ENCODE measurements at regions of chr7 and their contacts with region 1.

Region 1: DNA sequence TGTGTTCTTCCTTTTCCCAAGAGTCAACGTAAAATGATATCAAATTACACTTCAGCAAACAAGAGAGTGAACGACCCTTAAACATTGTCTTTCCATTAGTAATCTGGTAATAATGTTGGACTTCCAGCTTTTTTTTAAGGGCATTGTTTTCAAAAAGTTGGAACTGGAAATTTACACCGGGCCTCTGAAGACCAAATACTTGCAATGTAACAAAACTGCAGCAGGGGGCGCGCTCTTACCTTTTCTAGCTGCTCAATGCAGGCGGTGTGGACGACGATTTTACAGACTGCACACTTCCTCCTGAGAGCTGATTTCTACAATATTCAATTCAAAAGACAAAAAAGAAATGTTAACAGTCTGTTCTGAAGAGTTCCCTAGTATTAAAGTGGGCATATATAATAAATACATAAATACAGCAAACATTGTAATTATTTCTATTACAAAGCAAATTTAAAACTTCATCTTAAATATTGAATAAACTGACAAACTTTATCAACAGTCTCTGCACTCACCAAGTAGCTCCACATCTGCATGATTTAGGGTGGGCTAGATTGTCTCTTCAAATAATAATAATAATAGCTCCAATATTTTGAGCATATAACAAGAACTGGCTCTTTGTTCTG is 190.4 kb downstream of the DGKI start:
- DNase-seq: peak; percentile 20
- ATAC-seq: peak; percentile 90
- H3K4me3 ChIP-seq: no peak overlapping the region
- H3K27ac ChIP-seq: no peak overlapping the region
- H3K4me1 ChIP-seq: no peaks in the 10 kb centered on the region
- H3K27me3 ChIP-seq: no peaks in the 10 kb centered on the region
- CTCF ChIP-seq: peak; percentile 74 to 86 (median 83)
- EP300 ChIP-seq: no peak
- POLR2A ChIP-seq: no peak
- RAD21 ChIP-seq: peak; percentile 96

Region 2: DNA sequence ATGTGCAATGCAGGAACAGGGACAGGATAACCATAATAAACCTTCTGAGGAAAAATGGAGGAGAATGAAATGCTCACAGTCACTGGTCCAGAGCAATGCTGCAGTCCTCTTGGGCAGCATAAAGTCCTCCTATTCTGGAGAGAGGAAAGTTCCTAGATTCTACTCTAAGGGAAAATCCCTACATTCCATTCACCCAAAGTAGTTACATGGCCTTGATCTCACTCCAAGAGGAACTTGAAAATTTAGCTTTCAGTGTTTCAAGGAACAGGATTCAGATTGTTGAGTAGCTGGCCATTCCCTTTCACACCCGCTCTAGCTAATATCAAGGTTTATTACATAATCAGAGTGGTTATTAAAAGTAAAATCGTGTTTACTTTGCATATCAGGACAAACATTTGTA is 619.6 kb before region 1 on chr7:
- CTCF ChIA-PET with region 1: no interaction called
- POLR2A ChIA-PET with region 1: no interaction called
- RAD21 ChIA-PET with region 1: no interaction called
- SMC1A ChIA-PET with region 1: no interaction called
- in situ Hi-C with region 1: no loop called
- intact Hi-C with region 1: no loop called
- DNase-seq: no peak
- ATAC-seq: no peak
- H3K4me3 ChIP-seq: no peak overlapping the region
- H3K27ac ChIP-seq: no peak overlapping the region
- H3K4me1 ChIP-seq: no peaks in the 10 kb centered on the region
- H3K27me3 ChIP-seq: no peaks in the 10 kb centered on the region
- CTCF ChIP-seq: no peak
- EP300 ChIP-seq: no peak
- POLR2A ChIP-seq: no peak
- RAD21 ChIP-seq: no peak

Region 3: DNA sequence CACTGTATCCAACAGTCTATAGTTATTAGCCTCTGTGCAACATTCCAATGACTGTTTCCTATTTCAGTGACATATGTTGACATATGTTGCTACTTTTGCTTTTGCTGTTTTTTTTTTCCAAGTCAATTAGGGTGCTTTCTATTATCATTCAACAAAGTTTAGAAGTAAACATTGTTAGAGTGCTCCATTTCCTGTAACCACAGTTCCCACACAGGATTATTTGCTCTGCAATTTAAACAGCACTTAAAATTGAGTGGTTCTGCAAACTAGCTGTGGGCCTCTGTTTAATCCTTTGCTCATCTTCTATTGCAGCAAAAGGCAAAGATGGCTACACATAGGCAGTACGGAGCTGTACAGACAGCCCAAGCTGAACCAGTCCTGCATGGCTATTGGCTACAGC is 266.3 kb before region 1 on chr7:
- CTCF ChIA-PET with region 1: no interaction called
- POLR2A ChIA-PET with region 1: no interaction called
- RAD21 ChIA-PET with region 1: no interaction called
- SMC1A ChIA-PET with region 1: no interaction called
- in situ Hi-C with region 1: no loop called
- intact Hi-C with region 1: no loop called
- DNase-seq: no peak
- ATAC-seq: no peak
- H3K4me3 ChIP-seq: no peak overlapping the region
- H3K27ac ChIP-seq: no peak overlapping the region
- H3K4me1 ChIP-seq: no peaks in the 10 kb centered on the region
- H3K27me3 ChIP-seq: no peaks in the 10 kb centered on the region
- CTCF ChIP-seq: no peak
- EP300 ChIP-seq: no peak
- POLR2A ChIP-seq: no peak
- RAD21 ChIP-seq: no peak

Region 4: GRCh38 chr7:137572056-137572784 is 84.1 kb before region 1 on chr7:
- CTCF ChIA-PET with region 1: no interaction called
- POLR2A ChIA-PET with region 1: no interaction called
- RAD21 ChIA-PET with region 1: no interaction called
- SMC1A ChIA-PET with region 1: no interaction called
- in situ Hi-C with region 1: no loop called
- intact Hi-C with region 1: no loop called
- DNase-seq: no peak
- ATAC-seq: peak; percentile 82
- H3K4me3 ChIP-seq: no peak overlapping the region
- H3K27ac ChIP-seq: no peak overlapping the region
- H3K4me1 ChIP-seq: no peaks in the 10 kb centered on the region
- H3K27me3 ChIP-seq: no peaks in the 10 kb centered on the region
- CTCF ChIP-seq: no peak
- EP300 ChIP-seq: peak; percentile 38 to 39; a peak in 2 of 4 replicates
- POLR2A ChIP-seq: no peak
- RAD21 ChIP-seq: no peak

Region 5: DNA sequence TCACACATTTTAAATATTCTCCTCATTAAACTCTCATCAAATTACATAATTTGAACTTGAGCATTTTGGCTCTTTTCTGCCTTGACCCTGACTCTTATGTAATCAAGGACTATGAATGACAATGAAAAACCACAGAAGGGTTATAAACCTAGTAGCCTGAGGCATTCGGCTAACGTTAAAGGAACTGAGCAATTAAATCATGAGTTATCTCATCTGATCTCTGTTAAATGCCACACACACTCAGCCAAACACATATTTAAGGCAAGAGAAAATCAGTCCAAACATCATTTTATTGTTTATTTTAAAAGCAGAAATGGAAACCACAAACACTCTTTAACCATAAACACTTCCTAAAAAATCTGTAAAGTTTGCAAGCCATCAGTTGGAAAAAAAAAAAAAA is 13.9 kb before region 1 on chr7:
- CTCF ChIA-PET with region 1: interaction called, 12 read pairs
- POLR2A ChIA-PET with region 1: interaction called, 3 read pairs
- RAD21 ChIA-PET with region 1: no interaction called
- SMC1A ChIA-PET with region 1: interaction called, 7 read pairs
- in situ Hi-C with region 1: no loop called
- intact Hi-C with region 1: no loop called
- DNase-seq: no peak
- ATAC-seq: no peak
- H3K4me3 ChIP-seq: no peak overlapping the region
- H3K27ac ChIP-seq: no peak overlapping the region
- H3K4me1 ChIP-seq: no peaks in the 10 kb centered on the region
- H3K27me3 ChIP-seq: no peaks in the 10 kb centered on the region
- CTCF ChIP-seq: no peak
- EP300 ChIP-seq: no peak
- POLR2A ChIP-seq: no peak
- RAD21 ChIP-seq: no peak

Region 6: GRCh38 chr7:137731436-137731835 is 75.1 kb after region 1 on chr7:
- CTCF ChIA-PET with region 1: interaction called, 11 read pairs
- POLR2A ChIA-PET with region 1: interaction called, 3 read pairs
- RAD21 ChIA-PET with region 1: interaction called, 15 read pairs
- SMC1A ChIA-PET with region 1: interaction called, 7 read pairs
- in situ Hi-C with region 1: no loop called
- intact Hi-C with region 1: no loop called
- DNase-seq: no peak
- ATAC-seq: no peak
- H3K4me3 ChIP-seq: no peak overlapping the region
- H3K27ac ChIP-seq: no peak overlapping the region
- H3K4me1 ChIP-seq: no peaks in the 10 kb centered on the region
- H3K27me3 ChIP-seq: no peaks in the 10 kb centered on the region
- CTCF ChIP-seq: no peak
- EP300 ChIP-seq: no peak
- POLR2A ChIP-seq: no peak
- RAD21 ChIP-seq: no peak

Region 7: GRCh38 chr7:137789215-137789882 is 133.0 kb after region 1 on chr7:
- CTCF ChIA-PET with region 1: interaction called, 7 read pairs
- POLR2A ChIA-PET with region 1: no interaction called
- RAD21 ChIA-PET with region 1: interaction called, 13 read pairs
- SMC1A ChIA-PET with region 1: interaction called, 16 read pairs
- in situ Hi-C with region 1: no loop called
- intact Hi-C with region 1: no loop called
- DNase-seq: no peak
- ATAC-seq: no peak
- H3K4me3 ChIP-seq: no peak overlapping the region
- H3K27ac ChIP-seq: no peak overlapping the region
- H3K4me1 ChIP-seq: no peaks in the 10 kb centered on the region
- H3K27me3 ChIP-seq: no peaks in the 10 kb centered on the region
- CTCF ChIP-seq: no peak
- EP300 ChIP-seq: no peak
- POLR2A ChIP-seq: no peak
- RAD21 ChIP-seq: no peak

Region 8: DNA sequence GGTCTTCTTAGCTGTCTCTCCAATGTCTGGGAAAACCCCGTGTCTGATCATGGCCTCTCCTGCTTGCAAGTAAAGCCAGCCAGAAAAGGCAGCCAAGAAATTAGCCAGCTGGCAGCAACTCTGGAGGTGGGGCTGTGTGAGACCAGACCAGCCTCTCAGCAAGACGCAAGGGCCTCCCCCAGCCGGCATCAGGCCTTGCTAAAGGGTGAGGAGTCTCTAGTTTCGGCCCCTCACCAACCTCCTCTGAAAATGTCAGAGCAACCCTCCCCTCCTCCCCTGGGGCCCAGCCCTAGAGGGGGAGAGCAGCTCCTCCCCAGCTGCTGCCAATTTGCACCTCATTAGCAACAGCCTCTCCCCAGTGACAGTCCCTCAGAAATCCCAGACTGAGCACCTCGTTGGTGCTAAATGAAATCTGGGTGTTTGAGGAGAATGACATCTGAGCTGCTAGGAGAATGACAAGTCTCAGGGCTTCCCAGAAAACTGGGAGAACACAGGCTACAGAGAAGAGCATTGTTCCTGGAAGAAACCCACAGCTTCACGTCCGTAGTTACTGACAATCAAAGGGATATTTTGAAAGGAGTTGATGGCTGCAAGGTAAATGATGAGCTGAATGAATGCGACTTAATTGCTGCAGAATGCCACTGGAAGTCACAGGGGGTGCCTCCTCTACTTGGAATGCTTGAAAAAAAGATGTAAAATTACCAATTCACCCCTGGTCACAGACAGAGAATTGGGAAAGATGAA is 164.5 kb after region 1 on chr7:
- CTCF ChIA-PET with region 1: interaction called, 64 read pairs
- POLR2A ChIA-PET with region 1: interaction called, 4 read pairs
- RAD21 ChIA-PET with region 1: interaction called, 50 read pairs
- SMC1A ChIA-PET with region 1: interaction called, 42 read pairs
- in situ Hi-C with region 1: no loop called
- intact Hi-C with region 1: loop called (anchors 2 kb)
- DNase-seq: no peak
- ATAC-seq: peak; percentile 91
- H3K4me3 ChIP-seq: no peak overlapping the region
- H3K27ac ChIP-seq: no peak overlapping the region
- H3K4me1 ChIP-seq: peaks cover 6% of the 10 kb centered on the region
- H3K27me3 ChIP-seq: no peaks in the 10 kb centered on the region
- CTCF ChIP-seq: no peak
- EP300 ChIP-seq: no peak; a peak in 1 of 4 replicates
- POLR2A ChIP-seq: no peak
- RAD21 ChIP-seq: no peak

Region 9: GRCh38 chr7:137882261-137882668 is 225.9 kb after region 1 on chr7:
- CTCF ChIA-PET with region 1: interaction called, 137 read pairs
- POLR2A ChIA-PET with region 1: no interaction called
- RAD21 ChIA-PET with region 1: interaction called, 4 read pairs
- SMC1A ChIA-PET with region 1: interaction called, 11 read pairs
- in situ Hi-C with region 1: no loop called
- intact Hi-C with region 1: no loop called
- DNase-seq: peak; percentile 43
- ATAC-seq: peak; percentile 94
- H3K4me3 ChIP-seq: no peak overlapping the region
- H3K27ac ChIP-seq: peak overlapping the region; percentile 17; the same call in 1 of the 2 replicates
- H3K4me1 ChIP-seq: peaks cover 5% of the 10 kb centered on the region
- H3K27me3 ChIP-seq: no peaks in the 10 kb centered on the region
- CTCF ChIP-seq: no peak
- EP300 ChIP-seq: no peak
- POLR2A ChIP-seq: no peak
- RAD21 ChIP-seq: no peak

Region 10: DNA sequence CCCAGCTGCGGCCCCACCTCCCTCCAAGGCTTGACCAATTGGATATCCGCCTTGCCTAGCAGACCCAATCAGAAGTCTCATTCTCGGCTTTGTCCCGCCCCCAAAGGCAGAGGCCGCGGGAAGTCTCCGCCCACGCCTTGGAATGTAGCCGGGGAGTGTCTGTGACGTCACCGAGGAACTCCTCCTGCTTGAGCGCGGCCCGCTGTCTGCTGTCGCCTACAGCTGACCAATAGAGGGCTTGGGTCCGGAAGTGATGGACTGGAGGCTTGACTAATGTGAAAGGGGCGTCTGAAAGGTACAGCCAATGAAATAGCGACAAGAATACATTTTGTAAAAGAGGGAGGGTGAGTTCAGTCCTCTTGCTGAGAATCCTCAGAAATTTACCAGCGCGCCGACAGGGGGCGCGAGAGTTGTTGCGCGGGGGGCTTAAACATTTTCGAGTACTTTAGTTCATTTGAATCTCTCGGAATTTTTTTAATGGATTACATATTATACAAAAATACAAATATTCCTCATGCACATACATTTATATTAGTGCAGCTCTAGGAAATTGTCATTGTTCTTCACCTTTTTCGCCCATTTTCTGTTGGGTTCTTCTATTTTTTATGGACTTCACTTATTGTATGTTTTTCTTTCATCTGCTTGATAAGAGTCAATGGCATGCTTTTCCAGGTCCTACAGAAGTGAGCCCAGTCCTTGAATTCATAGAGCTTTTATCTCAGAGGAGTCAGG is 345.9 kb after region 1 on chr7:
- CTCF ChIA-PET with region 1: interaction called, 50 read pairs
- POLR2A ChIA-PET with region 1: no interaction called
- RAD21 ChIA-PET with region 1: interaction called, 19 read pairs
- SMC1A ChIA-PET with region 1: interaction called, 38 read pairs
- in situ Hi-C with region 1: loop called (anchors 5 kb)
- intact Hi-C with region 1: no loop called
- DNase-seq: peak; percentile 99
- ATAC-seq: peak; percentile 92
- H3K4me3 ChIP-seq: peak overlapping the region; percentile 83
- H3K27ac ChIP-seq: peak overlapping the region; percentile 55
- H3K4me1 ChIP-seq: peaks cover 6% of the 10 kb centered on the region
- H3K27me3 ChIP-seq: no peaks in the 10 kb centered on the region
- CTCF ChIP-seq: peak; percentile 85 to 95 (median 90)
- EP300 ChIP-seq: no peak
- POLR2A ChIP-seq: no peak
- RAD21 ChIP-seq: peak; percentile 62